Activated CD4-positive, alpha-beta memory T cell treated with anti-CD3 and anti-CD28 coated beads for 36 hours (primary cell): ENCODE measurements at regions of chr20 and their contacts with region 1.

Region 1: DNA sequence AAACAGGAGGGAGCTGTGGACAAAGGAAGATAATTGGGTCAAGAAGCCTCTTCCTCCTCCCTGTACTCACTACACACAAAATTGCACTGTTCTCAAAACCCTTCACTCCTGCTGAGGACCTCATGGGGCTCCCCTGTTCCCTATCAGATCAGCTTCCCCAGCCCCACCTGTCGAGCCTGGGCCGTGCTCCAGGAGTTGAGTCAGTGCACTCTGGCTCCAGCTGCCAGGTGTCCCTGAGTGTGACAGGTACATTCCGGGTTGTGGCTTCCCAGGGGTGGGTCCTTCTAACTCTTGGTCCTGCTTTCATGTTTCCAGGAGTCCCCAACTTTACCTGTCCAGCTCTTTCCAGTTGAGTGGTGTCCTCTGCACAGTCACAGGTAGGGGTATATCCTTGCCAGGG is 8.4 kb downstream of the RAB5IF start:
- DNase-seq: no peak
- H3K4me3 Mint-ChIP-seq: no peak overlapping the region
- H3K27ac Mint-ChIP-seq: peak overlapping the region; percentile 28
- H3K4me1 Mint-ChIP-seq: peaks cover 12% of the 10 kb centered on the region
- H3K27me3 Mint-ChIP-seq: no peaks in the 10 kb centered on the region

Region 2: GRCh38 chr20:36629719-36630681 is 16.0 kb after region 1 on chr20:
- CTCF ChIA-PET with region 1: interaction called, 10 read pairs
- POLR2A ChIA-PET with region 1: interaction called, 3 read pairs
- intact Hi-C with region 1: no loop called
- DNase-seq: peak; percentile 76
- H3K4me3 Mint-ChIP-seq: peak overlapping the region; percentile 50
- H3K27ac Mint-ChIP-seq: peak overlapping the region; percentile 88
- H3K4me1 Mint-ChIP-seq: peaks cover 31% of the 10 kb centered on the region
- H3K27me3 Mint-ChIP-seq: no peaks in the 10 kb centered on the region

Region 3: DNA sequence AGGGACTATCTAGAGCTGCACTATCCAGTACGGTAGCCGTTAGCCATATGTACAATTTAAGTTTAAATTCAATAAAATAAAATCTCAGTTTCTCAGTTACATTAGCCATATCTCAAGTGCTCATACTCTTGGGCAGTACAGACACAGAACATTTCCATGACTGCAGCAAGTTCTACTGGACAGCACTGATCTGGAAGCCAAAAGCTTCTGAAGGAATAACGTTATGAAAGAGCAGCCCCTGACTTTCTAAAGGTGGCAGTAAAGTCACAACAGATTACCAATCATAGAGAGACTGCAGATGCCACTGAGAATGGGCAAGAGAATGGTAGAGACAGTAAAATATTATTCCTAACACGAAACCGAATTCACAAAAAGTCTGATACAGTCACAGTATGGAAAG is 95.2 kb after region 1 on chr20:
- CTCF ChIA-PET with region 1: no interaction called
- POLR2A ChIA-PET with region 1: no interaction called
- intact Hi-C with region 1: no loop called
- DNase-seq: no peak
- H3K4me3 Mint-ChIP-seq: no peak overlapping the region
- H3K27ac Mint-ChIP-seq: no peak overlapping the region
- H3K4me1 Mint-ChIP-seq: no peaks in the 10 kb centered on the region
- H3K27me3 Mint-ChIP-seq: no peaks in the 10 kb centered on the region

Region 4: GRCh38 chr20:36728986-36729385 is 115.0 kb after region 1 on chr20:
- CTCF ChIA-PET with region 1: interaction called, 7 read pairs
- POLR2A ChIA-PET with region 1: no interaction called
- intact Hi-C with region 1: loop called (anchors 2 kb)
- DNase-seq: peak; percentile 26
- H3K4me3 Mint-ChIP-seq: no peak overlapping the region
- H3K27ac Mint-ChIP-seq: no peak overlapping the region
- H3K4me1 Mint-ChIP-seq: peaks cover 22% of the 10 kb centered on the region
- H3K27me3 Mint-ChIP-seq: no peaks in the 10 kb centered on the region